H1 (cell line): ENCODE measurements at regions of chr9 and their contacts with region 1.

Region 1: DNA sequence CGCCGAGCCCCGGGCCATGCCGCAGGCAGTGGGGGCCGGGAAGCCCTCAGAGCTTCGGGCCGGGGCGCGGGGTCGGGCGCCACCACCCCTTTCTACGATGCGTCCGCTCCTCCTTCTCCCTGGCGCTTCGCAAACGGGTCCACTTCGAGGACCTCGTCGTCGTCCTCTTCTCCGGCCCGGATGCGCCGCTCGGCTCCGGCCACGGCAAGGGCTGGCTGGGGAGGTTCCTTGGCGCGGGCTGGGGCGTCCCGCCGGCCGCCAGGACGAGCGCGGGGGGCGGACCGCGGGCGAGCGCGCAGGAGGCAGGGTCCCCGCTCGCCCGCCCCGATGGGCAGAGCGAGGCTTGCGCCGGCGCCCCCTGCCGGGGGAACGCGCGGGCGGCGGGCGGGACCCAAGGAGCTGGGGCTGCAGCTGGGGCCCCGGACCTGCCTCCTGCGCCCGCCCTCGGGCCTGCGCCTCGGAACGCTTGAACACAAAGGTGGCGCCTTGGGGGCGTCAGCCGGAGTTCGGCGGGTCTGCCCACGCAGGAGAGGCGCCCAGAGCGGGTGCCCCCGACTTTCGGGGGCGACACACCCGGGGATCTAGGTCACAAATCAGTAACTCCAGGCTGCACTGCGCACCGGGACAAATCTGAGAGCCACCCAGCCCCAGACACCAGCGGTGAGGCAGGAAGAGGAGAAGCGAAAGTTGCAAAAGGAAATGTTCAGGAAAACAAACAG is at the start of gene ROR2:
- DNase-seq: peak in 1 of 2 experiments; percentile 94
- H3K4me3 ChIP-seq: peak within 1 kb of the TSS; percentile 48 to 78 (median 72)
- H3K27ac ChIP-seq: no peak within 1 kb of the TSS
- H3K4me1 ChIP-seq: peaks cover 2 to 9% (median 2%) of the 10 kb centered on the region in 4 experiments
- H3K27me3 ChIP-seq: peaks cover 7 to 66% (median 51%) of the 10 kb centered on the region in 4 experiments
- CTCF ChIP-seq: peak; percentile 67 to 84 (median 68)
- EP300 ChIP-seq: no peak
- POLR2A ChIP-seq: no peak
- RAD21 ChIP-seq: peak; percentile 33 to 77
- total RNA-seq, gene ROR2: 4.0 and 4.3 TPM in 2 replicates

Region 2: GRCh38 chr9:91623004-91623403 is 327.1 kb before region 1 on chr9:
- CTCF ChIA-PET with region 1: no interaction called
- POLR2A ChIA-PET with region 1: no interaction called
- DNase-seq: no peak
- H3K4me3 ChIP-seq: no peak overlapping the region
- H3K27ac ChIP-seq: no peak overlapping the region
- H3K4me1 ChIP-seq: no peaks in the 10 kb centered on the region
- H3K27me3 ChIP-seq: no peaks in the 10 kb centered on the region
- CTCF ChIP-seq: no peak
- EP300 ChIP-seq: no peak
- POLR2A ChIP-seq: no peak
- RAD21 ChIP-seq: no peak

Region 3: GRCh38 chr9:91775011-91775707 is 174.9 kb before region 1 on chr9:
- CTCF ChIA-PET with region 1: interaction called, 156 read pairs
- POLR2A ChIA-PET with region 1: interaction called, 4 read pairs
- DNase-seq: peak; percentile 36 to 87
- H3K4me3 ChIP-seq: no peak overlapping the region
- H3K27ac ChIP-seq: no peak overlapping the region
- H3K4me1 ChIP-seq: peaks cover 0 to 2% (median 0%) of the 10 kb centered on the region in 4 experiments; a peak in 1 of 7 replicates
- H3K27me3 ChIP-seq: no peaks in the 10 kb centered on the region
- CTCF ChIP-seq: peak; percentile 90 to 97 (median 96)
- EP300 ChIP-seq: no peak
- POLR2A ChIP-seq: no peak
- RAD21 ChIP-seq: peak; percentile 96 to 99

Region 4: DNA sequence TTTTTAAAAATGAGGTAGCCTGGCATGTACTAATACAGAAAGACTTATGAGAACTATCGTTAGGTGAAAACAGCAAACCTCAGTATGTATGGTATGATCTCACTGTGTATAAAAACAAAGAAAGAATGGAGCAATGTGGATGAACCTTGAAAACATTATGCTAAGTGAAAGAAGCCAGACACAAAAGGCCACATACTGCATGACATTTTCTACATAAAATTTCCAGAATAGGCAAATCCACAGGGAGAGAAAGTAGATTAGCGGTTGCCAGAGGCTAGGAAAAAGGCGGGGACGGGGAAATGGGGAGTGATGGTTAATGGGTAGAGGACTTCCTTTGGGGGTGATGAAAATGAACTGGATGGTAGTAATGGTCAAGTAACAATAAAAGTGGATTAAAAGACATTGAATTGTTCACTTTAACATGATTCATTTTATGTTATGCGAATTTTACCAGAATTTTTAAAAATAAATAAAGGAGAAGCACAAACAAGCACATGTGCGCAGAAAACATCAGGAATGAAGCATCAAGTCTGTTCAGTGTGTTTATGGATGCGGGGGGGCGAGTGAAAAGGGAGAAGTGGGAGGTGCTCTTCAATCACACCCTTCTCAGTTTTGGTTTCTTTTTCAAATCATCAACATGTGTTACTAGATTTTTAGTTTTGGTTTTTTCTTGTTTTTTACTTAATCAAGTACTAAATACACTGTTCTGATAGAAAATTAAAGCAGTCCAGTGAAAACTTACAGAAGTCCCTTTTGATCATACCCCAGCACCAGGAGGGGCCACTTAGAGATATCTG is 16.4 kb before region 1 on chr9:
- CTCF ChIA-PET with region 1: interaction called, 31 read pairs
- POLR2A ChIA-PET with region 1: interaction called, 4 read pairs
- DNase-seq: no peak
- H3K4me3 ChIP-seq: no peak overlapping the region
- H3K27ac ChIP-seq: no peak overlapping the region
- H3K4me1 ChIP-seq: peaks cover 0 to 4% (median under 1%) of the 10 kb centered on the region in 4 experiments; a peak in 2 of 7 replicates
- H3K27me3 ChIP-seq: peaks cover 0 to 5% (median 2%) of the 10 kb centered on the region in 4 experiments; a peak in 2 of 7 replicates
- CTCF ChIP-seq: no peak
- EP300 ChIP-seq: no peak
- POLR2A ChIP-seq: no peak
- RAD21 ChIP-seq: no peak

Region 5: GRCh38 chr9:91978739-91979414 is 28.8 kb after region 1 on chr9:
- CTCF ChIA-PET with region 1: interaction called, 180 read pairs
- POLR2A ChIA-PET with region 1: no interaction called
- DNase-seq: peak in 1 of 2 experiments; percentile 58
- H3K4me3 ChIP-seq: no peak overlapping the region
- H3K27ac ChIP-seq: no peak overlapping the region
- H3K4me1 ChIP-seq: no peaks in the 10 kb centered on the region
- H3K27me3 ChIP-seq: no peaks in the 10 kb centered on the region
- CTCF ChIP-seq: peak; percentile 56 to 86 (median 75)
- EP300 ChIP-seq: no peak
- POLR2A ChIP-seq: no peak
- RAD21 ChIP-seq: peak; percentile 80 to 86

Region 6: DNA sequence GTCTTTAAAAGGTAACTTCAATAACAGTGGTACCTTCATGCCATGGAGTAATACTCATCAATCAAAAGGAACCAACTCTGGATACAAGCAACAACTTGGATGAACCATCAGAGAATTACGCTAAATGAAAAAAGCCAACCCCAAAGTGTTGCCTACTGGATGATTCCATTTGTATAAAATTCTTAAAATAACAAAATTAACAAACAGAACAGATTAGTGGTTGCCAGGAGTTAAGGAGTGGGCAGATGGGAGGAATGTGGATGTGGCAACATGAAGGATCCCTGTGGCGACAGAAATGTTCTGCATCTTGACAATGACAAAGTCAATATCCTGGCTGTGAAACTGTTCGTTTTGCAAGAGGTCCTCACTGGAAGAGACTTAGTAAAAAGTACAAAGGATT is 114.6 kb after region 1 on chr9:
- CTCF ChIA-PET with region 1: no interaction called
- POLR2A ChIA-PET with region 1: no interaction called
- DNase-seq: no peak
- H3K4me3 ChIP-seq: no peak overlapping the region
- H3K27ac ChIP-seq: no peak overlapping the region
- H3K4me1 ChIP-seq: peaks cover 0 to 3% (median 1%) of the 10 kb centered on the region in 4 experiments; a peak in 4 of 7 replicates
- H3K27me3 ChIP-seq: no peaks in the 10 kb centered on the region
- CTCF ChIP-seq: no peak
- EP300 ChIP-seq: no peak
- POLR2A ChIP-seq: no peak
- RAD21 ChIP-seq: no peak

Region 7: DNA sequence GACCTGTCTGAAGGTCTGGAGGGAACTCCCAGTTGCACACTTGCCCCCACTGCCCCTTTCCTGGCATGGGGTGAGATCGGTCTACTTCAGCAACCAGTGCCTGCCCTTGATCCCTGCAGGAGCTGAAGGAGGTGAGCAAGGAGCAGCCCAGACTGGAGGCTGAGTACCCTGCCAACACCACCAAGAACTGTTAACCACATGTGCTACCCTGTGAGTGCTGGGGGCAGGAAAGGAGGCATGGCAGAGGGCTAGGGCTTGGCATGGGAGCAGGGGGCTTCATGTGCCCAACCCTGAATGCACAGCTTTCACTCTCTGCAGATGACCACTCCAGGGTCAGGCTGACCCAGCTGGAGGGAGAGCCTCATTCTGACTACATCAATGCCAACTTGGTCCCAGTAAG is 182.4 kb after region 1 on chr9:
- CTCF ChIA-PET with region 1: no interaction called
- POLR2A ChIA-PET with region 1: no interaction called
- DNase-seq: no peak
- H3K4me3 ChIP-seq: no peak overlapping the region
- H3K27ac ChIP-seq: no peak overlapping the region
- H3K4me1 ChIP-seq: peaks cover 0 to 5% (median 2%) of the 10 kb centered on the region in 4 experiments; a peak in 3 of 7 replicates
- H3K27me3 ChIP-seq: no peaks in the 10 kb centered on the region
- CTCF ChIP-seq: no peak
- EP300 ChIP-seq: no peak
- POLR2A ChIP-seq: no peak
- RAD21 ChIP-seq: no peak